ENCODE measurements at regions of chr5 and their contacts with region 1.

Region 1: DNA sequence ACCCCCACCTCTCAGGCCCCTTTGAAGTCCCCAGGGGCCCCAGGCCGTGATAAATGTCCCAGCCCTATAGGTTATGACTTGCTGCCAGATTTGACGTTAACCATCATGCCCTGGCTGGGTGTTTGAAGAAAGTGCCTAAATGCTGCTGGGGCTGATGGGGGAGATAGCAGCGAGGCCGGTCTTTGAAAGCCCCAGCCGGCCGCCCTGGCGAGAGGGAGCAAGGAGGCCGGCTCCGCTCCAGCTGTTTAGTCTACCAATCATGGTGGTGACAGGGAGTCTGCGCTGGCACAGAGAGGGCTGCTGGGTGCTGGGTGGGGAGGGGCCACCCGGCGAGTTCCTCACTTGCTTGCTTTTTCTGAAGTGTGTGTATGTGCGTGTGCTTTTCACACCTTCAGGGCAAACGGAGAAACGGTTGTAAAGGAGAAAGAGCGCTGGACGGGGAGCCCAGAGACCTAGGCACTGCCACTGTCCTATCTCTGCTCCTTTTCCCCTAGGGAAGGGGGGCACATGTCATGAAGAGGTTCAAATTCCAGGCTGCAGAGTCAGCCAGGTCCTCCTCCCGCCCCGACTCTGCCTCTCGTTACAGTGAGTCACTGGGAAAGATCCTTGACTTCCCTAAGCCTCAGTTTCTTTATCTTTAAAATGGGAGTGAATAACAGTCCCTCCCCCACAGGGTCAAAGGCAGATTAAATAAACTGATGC is 126.1 kb upstream of the HAND1 start:
- DNase-seq: peak in 4 of 6 donors; percentile 7 to 66 (median 26)
- ATAC-seq: peak in 2 of 4 donors; percentile 40 to 59
- H3K4me3 ChIP-seq: no peak overlapping the region
- H3K27ac ChIP-seq: no peak overlapping the region
- H3K4me1 ChIP-seq: no peaks in the 10 kb centered on the region
- H3K27me3 ChIP-seq: peaks cover 0 to 3% (median 0%) of the 10 kb centered on the region in 4 donors
- CTCF ChIP-seq: no peak

Region 2: DNA sequence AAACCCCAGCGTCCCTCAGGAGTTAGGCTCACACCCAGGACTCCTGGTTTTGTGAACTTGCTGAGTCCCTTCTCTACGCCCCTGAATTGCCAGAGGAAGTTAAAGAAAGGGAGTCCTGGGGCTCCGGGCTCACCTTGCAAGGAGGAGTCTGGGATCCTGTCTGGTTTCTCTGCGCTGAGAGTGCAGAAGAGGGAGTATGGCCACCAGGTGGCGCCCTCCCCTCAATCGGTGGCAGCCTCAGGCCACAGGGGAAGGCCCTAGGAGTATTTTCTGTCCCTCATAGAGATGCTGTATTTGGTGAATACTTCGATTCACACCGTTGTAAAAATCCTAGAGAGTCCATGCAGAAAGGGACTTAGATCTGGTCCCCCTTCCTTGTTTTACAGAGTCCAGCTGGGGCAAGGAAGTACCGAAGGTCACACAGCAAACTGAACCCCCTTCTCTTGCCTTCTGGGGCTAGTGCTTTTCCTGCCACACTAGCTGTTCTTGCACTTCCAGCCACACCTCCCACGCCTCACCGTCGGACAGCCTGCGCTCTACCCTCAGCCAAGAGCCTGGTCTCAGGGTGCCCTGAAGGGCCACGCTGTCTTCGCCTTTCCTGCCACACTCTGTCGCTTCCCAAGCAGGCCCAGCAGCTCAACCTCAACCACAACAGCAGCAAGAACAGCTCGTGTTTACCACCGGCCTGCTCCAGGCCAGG is 136.3 kb before region 1 on chr5:
- intact Hi-C with region 1: loop called in 2 of 3 experiments (anchors 5 to 10 kb)
- DNase-seq: peak; percentile 49 to 95 (median 76)
- ATAC-seq: peak; percentile 90 to 98 (median 96)
- H3K4me3 ChIP-seq: no peak overlapping the region
- H3K27ac ChIP-seq: no peak overlapping the region
- H3K4me1 ChIP-seq: no peaks in the 10 kb centered on the region
- H3K27me3 ChIP-seq: peaks cover 0 to 7% (median 2%) of the 10 kb centered on the region in 4 donors
- CTCF ChIP-seq: peak; percentile 93 to 97 (median 96)

Region 3: GRCh38 chr5:155299386-155300005 is 695.4 kb after region 1 on chr5:
- intact Hi-C with region 1: no loop called
- DNase-seq: no peak
- ATAC-seq: no peak
- H3K4me3 ChIP-seq: no peak overlapping the region
- H3K27ac ChIP-seq: no peak overlapping the region
- H3K4me1 ChIP-seq: no peaks in the 10 kb centered on the region
- H3K27me3 ChIP-seq: no peaks in the 10 kb centered on the region
- CTCF ChIP-seq: no peak